Gastrocnemius medialis (tissue), 4 donors: ENCODE measurements at regions of chr12 and their contacts with region 1.

Region 1: DNA sequence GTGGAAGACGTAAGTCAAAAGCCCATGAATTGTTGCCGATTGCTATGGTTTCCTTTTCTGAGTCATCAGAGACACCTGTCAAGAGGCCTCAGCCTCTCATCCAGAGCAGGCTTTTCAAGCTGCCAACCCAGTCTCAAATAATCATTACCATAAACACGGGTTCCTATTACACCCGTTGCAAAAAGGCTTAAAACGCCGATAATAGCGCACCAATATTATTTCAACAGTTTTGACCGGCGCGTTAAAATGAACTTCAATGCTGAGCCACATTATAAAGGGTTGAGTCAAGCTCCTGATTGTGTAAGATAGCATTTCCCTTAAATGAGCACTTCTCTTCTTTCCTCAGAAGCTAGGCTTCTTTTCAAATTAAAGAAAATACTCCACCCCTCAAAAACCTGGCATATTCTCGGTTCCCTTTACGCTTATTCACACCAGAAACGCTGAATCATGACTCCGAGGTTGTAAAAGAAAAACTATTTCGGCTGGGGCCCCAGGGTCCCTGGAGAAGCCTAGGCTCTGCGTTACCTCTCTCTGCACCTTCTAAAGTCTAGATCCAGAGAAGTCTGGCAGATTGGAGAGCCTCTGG is 1.4 kb downstream of the TMTC1 start:
- DNase-seq: peak; percentile 25 to 29
- ATAC-seq: peak; percentile 66 to 68
- H3K4me3 ChIP-seq: peak overlapping the region; percentile 65 to 85 (median 74)
- H3K27ac ChIP-seq: peak overlapping the region; percentile 86 to 99 (median 97)
- H3K4me1 ChIP-seq: peaks cover 37 to 40% of the 10 kb centered on the region in 2 donors
- H3K27me3 ChIP-seq: no peaks in the 10 kb centered on the region
- CTCF ChIP-seq: no peak
- POLR2A ChIP-seq: peak; percentile 5 to 40

Region 2: DNA sequence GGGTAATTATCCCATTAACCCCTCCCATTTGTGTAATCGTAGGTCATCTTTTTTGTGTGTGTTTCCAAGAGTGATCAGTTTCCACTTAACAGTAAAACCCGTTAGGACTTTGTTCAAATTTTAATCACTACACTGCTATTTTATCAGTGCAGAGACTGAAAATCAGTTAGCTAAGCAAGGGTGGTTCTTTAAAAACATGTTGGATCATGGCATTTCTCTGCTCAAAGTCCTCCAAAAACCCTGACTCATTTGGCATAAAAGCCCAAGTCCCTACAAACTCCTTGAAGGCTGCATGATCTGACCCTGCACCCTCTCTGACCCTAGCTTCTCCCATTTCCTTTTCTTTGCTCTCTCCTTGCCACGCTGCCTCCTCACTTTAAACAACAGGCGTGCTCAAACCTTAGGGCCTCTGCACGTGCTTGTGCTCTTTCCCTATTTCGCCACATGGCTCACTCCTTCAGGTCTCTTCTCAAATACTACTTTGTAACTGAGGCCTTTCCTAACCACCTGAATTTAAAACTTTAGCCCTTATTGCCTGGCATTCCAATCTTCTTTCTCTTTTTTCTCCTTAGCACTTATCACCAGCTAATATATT is 271.7 kb before region 1 on chr12:
- in situ Hi-C with region 1: no loop called
- intact Hi-C with region 1: loop called (anchors 5 kb)
- DNase-seq: no peak
- ATAC-seq: no peak
- H3K4me3 ChIP-seq: no peak overlapping the region
- H3K27ac ChIP-seq: no peak overlapping the region
- H3K4me1 ChIP-seq: no peaks in the 10 kb centered on the region
- H3K27me3 ChIP-seq: no peaks in the 10 kb centered on the region
- CTCF ChIP-seq: no peak
- POLR2A ChIP-seq: no peak

Region 3: GRCh38 chr12:29581631-29582030 is 200.7 kb before region 1 on chr12:
- in situ Hi-C with region 1: no loop called
- intact Hi-C with region 1: no loop called
- DNase-seq: no peak
- ATAC-seq: no peak
- H3K4me3 ChIP-seq: no peak overlapping the region
- H3K27ac ChIP-seq: peak overlapping the region; percentile 2 to 71 (median 60)
- H3K4me1 ChIP-seq: peaks cover 21 to 49% of the 10 kb centered on the region in 2 donors
- H3K27me3 ChIP-seq: no peaks in the 10 kb centered on the region
- CTCF ChIP-seq: no peak
- POLR2A ChIP-seq: no peak

Region 4: GRCh38 chr12:29655861-29656260 is 126.5 kb before region 1 on chr12:
- in situ Hi-C with region 1: no loop called
- intact Hi-C with region 1: loop called (anchors 2 kb)
- DNase-seq: peak in 1 of 2 donors; percentile 24
- ATAC-seq: peak; percentile 43 to 53
- H3K4me3 ChIP-seq: no peak overlapping the region
- H3K27ac ChIP-seq: peak overlapping the region in 3 of 4 donors; percentile 30 to 75 (median 68)
- H3K4me1 ChIP-seq: peaks cover 29 to 34% of the 10 kb centered on the region in 2 donors
- H3K27me3 ChIP-seq: no peaks in the 10 kb centered on the region
- CTCF ChIP-seq: no peak
- POLR2A ChIP-seq: no peak

Region 5: DNA sequence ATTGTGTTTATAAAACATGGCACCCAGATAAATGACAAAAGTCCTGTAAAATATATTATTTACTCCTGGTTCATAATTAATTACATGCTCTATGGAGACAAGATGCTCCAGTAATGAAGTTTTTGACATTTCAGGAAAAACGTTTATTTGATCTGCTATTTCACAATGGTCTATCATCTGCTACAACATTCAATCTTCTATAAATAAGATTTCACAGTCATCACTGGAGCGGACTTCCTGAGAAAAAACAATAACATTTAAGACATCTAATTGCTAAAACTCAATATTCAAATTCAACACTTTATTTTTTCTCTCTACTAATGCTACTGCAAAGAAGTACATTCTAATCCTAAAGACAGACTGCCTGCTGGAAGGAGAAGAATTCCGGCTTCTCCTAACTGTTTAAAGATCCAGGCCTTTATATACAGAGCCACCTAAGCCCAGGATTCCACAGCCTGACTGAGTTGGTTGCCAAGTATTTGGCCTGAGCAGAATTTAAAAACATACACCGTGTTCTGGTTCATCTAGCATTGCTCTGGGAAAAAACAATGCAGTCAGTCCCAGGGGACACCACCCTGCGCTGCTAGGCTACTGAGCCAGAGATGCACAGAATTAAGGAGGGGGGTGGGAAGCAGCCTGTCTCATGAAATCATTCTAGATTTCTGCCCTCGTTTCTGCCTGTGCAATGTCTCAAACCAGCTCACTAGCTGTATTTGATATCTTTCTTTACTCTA is 56.6 kb before region 1 on chr12:
- in situ Hi-C with region 1: no loop called
- intact Hi-C with region 1: loop called (anchors 5 kb)
- DNase-seq: peak; percentile 45 to 78
- ATAC-seq: peak; percentile 77 to 95
- H3K4me3 ChIP-seq: peak overlapping the region; percentile 7 to 41 (median 13)
- H3K27ac ChIP-seq: peak overlapping the region; percentile 79 to 93 (median 82)
- H3K4me1 ChIP-seq: peaks cover 66 to 71% of the 10 kb centered on the region in 2 donors
- H3K27me3 ChIP-seq: no peaks in the 10 kb centered on the region
- CTCF ChIP-seq: no peak
- POLR2A ChIP-seq: peak in 1 of 2 donors; percentile 46

Region 6: GRCh38 chr12:29762637-29763300 is 19.6 kb before region 1 on chr12:
- in situ Hi-C with region 1: no loop called
- intact Hi-C with region 1: loop called (anchors 2 kb)
- DNase-seq: peak; percentile 77 to 89
- ATAC-seq: peak; percentile 100
- H3K4me3 ChIP-seq: no peak overlapping the region
- H3K27ac ChIP-seq: peak overlapping the region; percentile 49 to 67 (median 62)
- H3K4me1 ChIP-seq: peaks cover 23 to 30% of the 10 kb centered on the region in 2 donors
- H3K27me3 ChIP-seq: no peaks in the 10 kb centered on the region
- CTCF ChIP-seq: no peak
- POLR2A ChIP-seq: no peak